ENCODE measurements at regions of chr19 and their contacts with region 1.

Region 1: DNA sequence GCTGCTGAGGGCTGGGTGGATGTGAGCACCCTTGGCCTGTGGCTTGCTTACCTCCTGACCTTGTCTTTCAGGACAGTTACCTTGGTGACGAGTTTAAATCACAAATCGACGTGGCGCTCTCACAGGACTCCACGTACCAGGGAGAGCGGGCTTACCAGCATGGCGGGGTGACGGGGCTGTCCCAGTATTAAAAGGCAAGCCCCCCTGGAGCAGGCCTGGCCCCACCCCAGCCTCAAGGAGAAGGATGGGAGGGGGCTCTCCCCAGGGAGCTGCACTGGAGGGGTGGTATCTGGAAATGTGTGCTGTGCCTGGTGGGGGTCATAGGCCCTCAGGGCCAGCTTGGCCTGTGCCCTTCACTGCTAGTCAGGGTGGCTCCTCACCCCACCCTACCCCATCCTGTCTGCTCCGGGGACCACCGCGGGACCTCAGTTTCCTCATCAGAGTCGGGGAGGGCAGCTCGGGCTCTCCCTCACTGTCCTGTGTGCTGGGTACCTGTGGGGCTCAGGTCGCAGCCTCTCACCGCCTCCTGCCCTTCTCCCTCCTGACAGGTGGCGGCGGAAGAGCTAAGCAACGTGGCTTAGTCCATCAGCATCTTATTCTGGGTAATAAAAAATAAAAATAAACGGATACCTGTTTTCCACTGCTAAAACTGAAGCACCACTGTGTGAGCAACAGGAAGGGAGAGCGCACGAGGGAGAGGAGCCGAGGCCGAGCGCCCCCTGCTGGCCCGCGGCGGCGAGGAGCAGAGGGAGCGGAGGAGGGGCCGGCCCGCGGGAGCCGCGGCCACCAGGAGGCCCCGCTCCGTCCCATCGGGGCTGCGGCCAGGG is 29.8 kb downstream of the CERS1 start:
- DNase-seq: no peak
- H3K4me3 ChIP-seq: no peak overlapping the region
- H3K27ac ChIP-seq: no peak overlapping the region
- H3K27me3 ChIP-seq: peaks cover 8% of the 10 kb centered on the region
- CTCF ChIP-seq: peak; percentile 93

Region 2: GRCh38 chr19:18878858-18879578 is 12.8 kb after region 1 on chr19:
- CTCF ChIA-PET with region 1: interaction called, 22 read pairs
- POLR2A ChIA-PET with region 1: no interaction called
- DNase-seq: no peak
- H3K4me3 ChIP-seq: no peak overlapping the region
- H3K27ac ChIP-seq: no peak overlapping the region
- H3K27me3 ChIP-seq: no peaks in the 10 kb centered on the region
- CTCF ChIP-seq: no peak

Region 3: GRCh38 chr19:18951665-18952281 is 85.6 kb after region 1 on chr19:
- CTCF ChIA-PET with region 1: no interaction called
- POLR2A ChIA-PET with region 1: no interaction called
- DNase-seq: no peak
- H3K4me3 ChIP-seq: no peak overlapping the region
- H3K27ac ChIP-seq: no peak overlapping the region
- H3K27me3 ChIP-seq: no peaks in the 10 kb centered on the region
- CTCF ChIP-seq: no peak

Region 4: GRCh38 chr19:18987456-18987855 is 121.3 kb after region 1 on chr19:
- CTCF ChIA-PET with region 1: interaction called, 14 read pairs
- POLR2A ChIA-PET with region 1: no interaction called
- DNase-seq: no peak
- H3K4me3 ChIP-seq: no peak overlapping the region
- H3K27ac ChIP-seq: no peak overlapping the region
- H3K27me3 ChIP-seq: peaks cover 10% of the 10 kb centered on the region
- CTCF ChIP-seq: no peak

Region 5: DNA sequence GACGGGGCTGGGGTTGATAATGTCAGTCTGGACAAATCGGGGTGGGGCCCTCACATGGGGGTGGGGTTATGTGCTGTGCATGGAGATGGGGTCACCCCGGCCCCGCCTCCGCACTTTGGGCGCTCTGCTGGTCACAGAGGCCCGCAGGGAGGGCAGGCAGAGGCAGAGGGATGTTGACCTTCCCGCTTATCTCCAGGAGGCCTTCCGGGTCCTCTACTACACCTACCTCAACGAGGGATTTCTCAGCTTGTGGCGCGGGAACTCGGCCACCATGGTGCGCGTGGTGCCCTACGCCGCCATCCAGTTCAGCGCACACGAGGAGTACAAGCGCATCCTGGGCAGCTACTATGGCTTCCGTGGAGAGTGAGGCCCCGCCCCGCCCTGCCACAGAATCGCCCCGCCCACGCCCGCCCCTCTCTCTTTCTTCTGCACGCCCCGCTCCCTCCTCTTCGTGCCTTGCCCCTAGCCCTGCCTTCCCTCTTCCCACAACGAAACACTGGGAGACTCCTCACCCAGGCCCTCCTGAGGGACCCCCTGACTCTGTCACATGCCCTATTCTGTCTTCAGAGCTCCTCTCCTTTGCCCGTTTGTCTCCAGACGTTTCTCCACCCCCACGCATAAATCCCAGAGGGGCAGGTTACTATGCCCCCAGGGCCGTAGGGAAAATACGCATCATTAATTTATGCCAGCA is 239.3 kb after region 1 on chr19:
- CTCF ChIA-PET with region 1: no interaction called
- POLR2A ChIA-PET with region 1: no interaction called
- DNase-seq: no peak
- H3K4me3 ChIP-seq: peak overlapping the region; percentile 55
- H3K27ac ChIP-seq: no peak overlapping the region
- H3K27me3 ChIP-seq: no peaks in the 10 kb centered on the region
- CTCF ChIP-seq: no peak

Measured in AG04450 (cell line).